Esophagus muscularis mucosa (tissue), 4 donors: ENCODE measurements at regions of chr3 and their contacts with region 1.

Region 1: GRCh38 chr3:167882067-167882667 is 146.6 kb downstream of the SERPINI1 start:
- DNase-seq: no peak
- H3K4me3 ChIP-seq: peak overlapping the region in 1 of 4 donors; percentile 21
- H3K27ac ChIP-seq: no peak overlapping the region
- H3K4me1 ChIP-seq: peaks cover 3 to 10% (median 6%) of the 10 kb centered on the region in 4 donors
- H3K27me3 ChIP-seq: no peaks in the 10 kb centered on the region
- CTCF ChIP-seq: peak; percentile 64 to 74 (median 66)
- EP300 ChIP-seq: no peak
- POLR2A ChIP-seq: no peak

Region 2: GRCh38 chr3:167372138-167372537 is 510.0 kb before region 1 on chr3:
- intact Hi-C with region 1: loop called (anchors 10 kb)
- DNase-seq: no peak
- H3K4me3 ChIP-seq: no peak overlapping the region
- H3K27ac ChIP-seq: no peak overlapping the region
- H3K4me1 ChIP-seq: no peaks in the 10 kb centered on the region
- H3K27me3 ChIP-seq: no peaks in the 10 kb centered on the region
- CTCF ChIP-seq: no peak
- EP300 ChIP-seq: no peak
- POLR2A ChIP-seq: no peak

Region 3: DNA sequence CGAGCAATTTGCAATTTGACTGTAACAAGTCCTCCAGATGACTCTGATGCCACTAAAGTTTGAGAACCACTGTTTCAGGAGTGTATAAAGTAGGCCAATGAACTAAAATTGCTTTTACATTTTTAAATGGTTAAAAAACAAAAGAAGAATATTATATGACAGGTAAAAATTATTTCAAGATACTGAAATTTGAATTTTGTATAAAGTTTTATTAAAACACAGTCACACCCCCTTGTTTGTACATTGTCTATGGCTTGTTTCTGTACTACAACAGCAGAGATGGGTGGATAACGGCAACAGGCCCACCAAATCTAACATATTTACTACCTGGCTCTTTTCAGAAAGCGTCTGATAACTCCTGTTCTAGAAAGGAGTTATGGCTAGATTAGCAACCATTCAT is 195.5 kb before region 1 on chr3:
- intact Hi-C with region 1: loop called (anchors 5 kb)
- DNase-seq: no peak
- H3K4me3 ChIP-seq: no peak overlapping the region
- H3K27ac ChIP-seq: no peak overlapping the region
- H3K4me1 ChIP-seq: no peaks in the 10 kb centered on the region
- H3K27me3 ChIP-seq: no peaks in the 10 kb centered on the region
- CTCF ChIP-seq: no peak
- EP300 ChIP-seq: no peak
- POLR2A ChIP-seq: no peak

Region 4: DNA sequence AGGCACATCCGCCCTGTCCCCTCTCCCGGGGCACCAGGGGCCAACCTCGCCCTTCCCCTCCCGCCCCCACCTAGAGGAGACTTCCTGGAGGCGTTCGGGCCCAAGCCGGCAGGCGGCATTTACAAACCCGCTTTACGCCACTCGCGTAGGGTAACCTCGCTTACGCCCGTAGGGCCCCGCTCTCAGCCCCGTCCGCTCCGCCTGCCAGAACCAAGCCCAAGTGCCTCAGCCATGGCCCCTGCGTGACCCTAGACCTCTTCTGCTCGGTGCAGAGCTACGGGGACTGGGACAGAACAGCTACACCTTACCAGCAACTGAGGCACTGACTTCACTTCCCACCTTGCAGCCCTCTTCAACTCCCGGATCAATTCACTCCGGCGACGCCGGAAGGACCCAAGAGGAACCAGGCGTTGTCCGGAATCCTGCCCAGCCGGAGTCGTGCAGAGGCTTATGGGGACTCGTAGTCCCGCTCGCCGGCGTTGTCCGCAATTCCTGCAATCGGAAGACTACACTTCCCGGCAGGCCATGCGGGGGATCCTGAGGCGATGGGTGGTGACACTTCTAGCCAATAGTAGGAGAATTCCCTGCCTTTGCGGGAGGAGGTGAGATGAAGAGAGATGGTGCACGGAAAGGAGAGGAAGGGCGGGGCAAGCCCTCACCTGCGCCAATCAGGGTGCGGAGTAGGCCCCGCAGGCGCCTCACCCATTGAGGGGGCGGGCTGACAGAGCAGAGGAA is 147.5 kb before region 1 on chr3 and contains the start of gene PDCD10:
- intact Hi-C with region 1: loop called (anchors 5 kb)
- DNase-seq: peak; percentile 99
- H3K4me3 ChIP-seq: peak within 1 kb of the TSS; percentile 75 to 85 (median 76)
- H3K27ac ChIP-seq: peak within 1 kb of the TSS; percentile 87 to 93 (median 90)
- H3K4me1 ChIP-seq: peaks cover 24 to 46% (median 30%) of the 10 kb centered on the region in 4 donors
- H3K27me3 ChIP-seq: no peaks in the 10 kb centered on the region
- CTCF ChIP-seq: no peak
- EP300 ChIP-seq: no peak
- POLR2A ChIP-seq: no peak
- total RNA-seq, gene PDCD10: 58.3 to 90.1 (median 65.1) TPM

Region 5: DNA sequence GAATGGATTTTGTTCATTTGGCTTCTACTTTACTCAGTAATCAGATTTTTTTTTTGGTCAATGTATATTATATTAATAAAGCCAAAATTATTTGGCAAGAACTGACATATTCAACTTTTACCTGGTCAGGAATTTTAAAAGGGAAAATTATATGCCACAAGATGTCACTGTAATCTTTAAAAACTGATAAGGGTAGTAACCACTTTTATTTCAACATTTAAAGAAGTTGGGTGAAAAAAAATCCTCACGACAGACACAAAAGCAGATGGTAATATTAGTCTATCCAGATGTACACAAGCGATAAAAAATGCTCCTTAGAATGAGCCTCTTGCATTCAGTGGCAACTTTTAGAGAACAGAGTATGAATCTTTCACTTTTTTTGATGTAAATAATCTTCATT is 44.7 kb before region 1 on chr3:
- intact Hi-C with region 1: loop called (anchors 5 kb)
- DNase-seq: no peak
- H3K4me3 ChIP-seq: no peak overlapping the region
- H3K27ac ChIP-seq: no peak overlapping the region
- H3K4me1 ChIP-seq: peaks cover 0 to 12% (median 8%) of the 10 kb centered on the region in 4 donors
- H3K27me3 ChIP-seq: no peaks in the 10 kb centered on the region
- CTCF ChIP-seq: peak in 2 of 3 experiments; percentile 25 to 33
- EP300 ChIP-seq: no peak
- POLR2A ChIP-seq: no peak

Region 6: GRCh38 chr3:167941234-167941995 is 59.2 kb after region 1 on chr3:
- intact Hi-C with region 1: no loop called
- DNase-seq: no peak
- H3K4me3 ChIP-seq: no peak overlapping the region
- H3K27ac ChIP-seq: no peak overlapping the region
- H3K4me1 ChIP-seq: peaks cover 0 to 4% (median 2%) of the 10 kb centered on the region in 4 donors
- H3K27me3 ChIP-seq: no peaks in the 10 kb centered on the region
- CTCF ChIP-seq: no peak
- EP300 ChIP-seq: no peak
- POLR2A ChIP-seq: no peak